ENCODE measurements at regions of chr12 and their contacts with region 1.

Region 1: DNA sequence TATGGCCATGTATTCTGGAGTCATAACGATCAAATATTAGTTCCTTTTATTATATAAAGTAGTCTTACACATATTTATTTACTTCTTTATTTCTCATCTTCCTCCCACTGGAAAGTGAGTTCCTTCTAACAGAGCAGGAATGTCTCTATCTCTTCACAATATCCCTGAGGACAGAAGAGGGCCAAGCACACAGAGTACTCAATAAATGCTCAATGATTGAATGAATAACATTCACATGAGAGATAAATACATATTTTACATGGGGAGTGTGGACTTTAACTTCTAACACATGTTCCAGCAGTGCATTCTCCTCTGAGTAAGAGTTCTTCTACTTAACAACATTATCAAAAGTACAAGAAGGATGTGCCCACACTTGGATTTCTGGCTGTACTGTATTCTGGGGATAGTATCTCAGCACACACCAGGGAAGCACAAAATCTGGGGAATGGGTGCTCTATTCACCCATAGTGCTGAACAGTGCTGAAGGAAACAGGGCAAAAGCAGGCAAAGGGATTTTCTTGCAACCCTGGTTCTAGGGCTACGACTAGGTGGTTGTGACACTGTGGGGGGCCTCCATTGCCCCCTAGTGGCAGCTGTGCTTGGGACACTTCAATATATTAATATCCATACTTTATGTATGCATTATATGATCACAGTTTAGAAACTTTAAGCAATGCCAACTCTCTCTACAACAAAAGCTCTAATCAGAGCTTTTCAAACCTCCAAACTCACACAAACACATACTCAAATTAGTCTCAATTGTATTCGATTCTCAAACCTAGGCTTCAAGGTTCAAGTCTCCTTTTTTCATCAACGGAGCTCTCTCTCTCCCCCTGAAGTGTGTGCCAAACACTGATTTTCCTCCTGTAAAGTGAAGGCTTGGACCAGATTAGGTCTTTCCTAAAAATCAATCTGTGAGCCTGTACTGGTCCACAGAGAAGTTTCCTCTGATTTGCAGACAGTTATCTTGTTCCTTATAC is 115.5 kb downstream of the SLC2A13 start:
- DNase-seq: peak; percentile 44 to 79 (median 60)
- H3K4me3 ChIP-seq: no peak overlapping the region
- H3K27ac ChIP-seq: no peak overlapping the region
- H3K4me1 ChIP-seq: no peaks in the 10 kb centered on the region
- H3K27me3 ChIP-seq: no peaks in the 10 kb centered on the region
- CTCF ChIP-seq: peak; percentile 60 to 87 (median 82)
- POLR2A ChIP-seq: no peak

Region 2: GRCh38 chr12:39764944-39765560 is 225.4 kb before region 1 on chr12:
- intact Hi-C with region 1: loop called (anchors 5 to 10 kb)
- DNase-seq: peak in 2 of 7 donors; percentile 17 to 26
- H3K4me3 ChIP-seq: no peak overlapping the region
- H3K27ac ChIP-seq: no peak overlapping the region
- H3K4me1 ChIP-seq: no peaks in the 10 kb centered on the region
- H3K27me3 ChIP-seq: no peaks in the 10 kb centered on the region
- CTCF ChIP-seq: peak; percentile 75 to 89 (median 86)
- POLR2A ChIP-seq: no peak